ENCODE measurements at regions of chr14 and their contacts with region 1.

Region 1: GRCh38 chr14:81170104-81170828 is 50.5 kb downstream of the GTF2A1 start:
- DNase-seq: peak; percentile 92 to 97 (median 96)
- ATAC-seq: peak; percentile 99 to 100 (median 100)
- H3K4me3 ChIP-seq: peak overlapping the region; percentile 57 to 87 (median 72)
- H3K27ac ChIP-seq: peak overlapping the region; percentile 82 to 97 (median 93)
- H3K4me1 ChIP-seq: peaks cover 0 to 19% (median 8%) of the 10 kb centered on the region in 12 donors
- H3K27me3 ChIP-seq: no peaks in the 10 kb centered on the region
- CTCF ChIP-seq: peak; percentile 82 to 95 (median 90)
- POLR2A ChIP-seq: peak in 1 of 2 donors; percentile 68

Region 2: GRCh38 chr14:81211844-81212243 is 41.6 kb after region 1 on chr14:
- intact Hi-C with region 1: loop called in 2 of 10 experiments (anchors 5 kb)
- DNase-seq: peak in 3 of 5 donors; percentile 21 to 72 (median 50)
- ATAC-seq: peak in 3 of 4 donors; percentile 84 to 86 (median 85)
- H3K4me3 ChIP-seq: no peak overlapping the region
- H3K27ac ChIP-seq: no peak overlapping the region
- H3K4me1 ChIP-seq: peaks cover 0 to 33% (median 15%) of the 10 kb centered on the region in 12 donors
- H3K27me3 ChIP-seq: no peaks in the 10 kb centered on the region
- CTCF ChIP-seq: peak in 11 of 12 donors; percentile 29 to 58 (median 43)
- POLR2A ChIP-seq: no peak

Region 3: GRCh38 chr14:81220830-81221578 is 50.7 kb after region 1 on chr14 and contains the start of gene GTF2A1:
- intact Hi-C with region 1: loop called in 3 of 10 experiments (anchors 1 to 5 kb)
- DNase-seq: peak; percentile 95 to 98 (median 97)
- ATAC-seq: peak; percentile 86 to 95 (median 90)
- H3K4me3 ChIP-seq: peak within 1 kb of the TSS; percentile 80 to 91 (median 86)
- H3K27ac ChIP-seq: peak within 1 kb of the TSS; percentile 95 to 100 (median 98)
- H3K4me1 ChIP-seq: peaks cover 0 to 34% (median 25%) of the 10 kb centered on the region in 12 donors
- H3K27me3 ChIP-seq: no peaks in the 10 kb centered on the region
- CTCF ChIP-seq: peak in 1 of 12 donors; percentile 4
- POLR2A ChIP-seq: peak; percentile 88 to 95
- total RNA-seq, gene GTF2A1: 12.7 to 31.3 (median 23.3) TPM